ENCODE measurements at regions of chr1 and their contacts with region 1.

Region 1: DNA sequence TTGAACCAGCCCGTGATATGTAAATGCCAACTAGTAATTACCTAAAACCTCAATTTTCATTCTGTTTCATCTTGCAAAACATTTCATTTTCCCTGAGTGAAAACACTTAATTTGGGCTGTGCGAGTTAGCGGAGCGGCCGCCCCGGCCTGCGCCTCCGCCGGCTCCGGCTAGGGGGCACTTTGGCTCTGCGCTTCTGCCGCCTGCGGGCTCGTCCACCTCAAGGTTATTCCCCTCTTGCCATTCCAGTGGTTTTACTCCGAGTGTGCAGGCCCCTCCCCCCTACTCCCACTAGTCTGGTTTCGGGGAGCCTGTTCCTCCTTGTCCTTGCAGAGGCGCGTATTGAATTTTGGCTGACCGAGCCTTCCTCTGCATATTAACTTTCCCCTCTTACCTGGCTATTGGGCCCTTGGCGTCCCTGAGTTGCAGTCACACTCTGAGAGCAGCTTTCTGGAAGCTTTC is 55.6 kb downstream of the PEX14 start:
- DNase-seq: peak; percentile 56 to 83 (median 76)
- H3K4me3 ChIP-seq: no peak overlapping the region
- H3K27ac ChIP-seq: no peak overlapping the region
- H3K4me1 ChIP-seq: peaks cover 6% of the 10 kb centered on the region
- H3K27me3 ChIP-seq: no peaks in the 10 kb centered on the region
- CTCF ChIP-seq: peak; percentile 49 to 80 (median 53)
- EP300 ChIP-seq: no peak
- POLR2A ChIP-seq: no peak

Region 2: GRCh38 chr1:10679496-10680220 is 149.3 kb after region 1 on chr1:
- intact Hi-C with region 1: loop called in 1 of 4 experiments (anchors 10 kb)
- DNase-seq: no peak
- H3K4me3 ChIP-seq: no peak overlapping the region
- H3K27ac ChIP-seq: no peak overlapping the region
- H3K4me1 ChIP-seq: peaks cover 7% of the 10 kb centered on the region
- H3K27me3 ChIP-seq: no peaks in the 10 kb centered on the region
- CTCF ChIP-seq: no peak
- EP300 ChIP-seq: no peak
- POLR2A ChIP-seq: no peak